ENCODE measurements at regions of chr11 and their contacts with region 1.

Region 1: GRCh38 chr11:13949876-13950275 is 12.6 kb upstream of the SPON1 start:
- DNase-seq: peak in 1 of 4 experiments; percentile 37
- ATAC-seq: no peak
- H3K4me3 ChIP-seq: no peak overlapping the region
- H3K27ac ChIP-seq: no peak overlapping the region
- H3K4me1 ChIP-seq: no peaks in the 10 kb centered on the region
- H3K27me3 ChIP-seq: peaks cover 5 to 8% of the 10 kb centered on the region in 2 experiments; a peak in 2 of 5 replicates
- CTCF ChIP-seq: peak in 1 of 3 experiments; percentile 55; a peak in 2 of 6 replicates
- EP300 ChIP-seq: no peak
- POLR2A ChIP-seq: no peak
- RAD21 ChIP-seq: peak; percentile 76 to 85

Region 2: DNA sequence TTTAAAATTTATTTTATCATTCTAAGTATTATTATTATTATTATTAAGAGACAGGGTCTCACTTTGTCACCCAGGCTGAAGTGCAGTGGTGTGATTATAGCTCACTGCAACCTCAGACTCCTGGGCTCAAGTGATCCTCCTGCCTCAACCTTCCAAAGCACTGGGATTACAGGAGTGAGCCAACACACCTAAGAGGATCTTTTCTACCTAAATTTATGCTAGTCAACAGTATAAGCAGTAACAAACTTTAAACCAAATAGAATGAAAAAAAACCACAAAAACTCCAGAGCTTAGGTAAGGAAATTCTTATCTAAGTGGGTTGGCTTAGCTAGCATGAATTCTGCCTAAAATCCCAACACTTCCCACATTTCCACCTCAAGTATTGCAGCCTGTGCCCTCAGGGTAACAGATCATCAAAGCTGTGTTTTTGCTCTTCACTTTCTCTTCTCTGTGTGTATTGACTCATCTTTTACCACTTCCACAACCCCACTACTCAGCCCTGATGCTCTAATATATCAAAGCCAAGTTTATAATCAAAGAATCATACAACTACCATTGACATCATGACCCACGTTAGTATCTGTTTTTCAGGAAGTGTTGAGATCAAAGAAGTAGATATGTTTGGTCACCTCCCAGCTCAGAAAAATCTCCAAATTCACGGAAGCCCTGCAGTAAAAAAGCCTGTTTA is 81.0 kb before region 1 on chr11:
- CTCF ChIA-PET with region 1: no interaction called
- POLR2A ChIA-PET with region 1: no interaction called
- in situ Hi-C with region 1: no loop called
- intact Hi-C with region 1: loop called (anchors 2 kb)
- DNase-seq: no peak
- ATAC-seq: no peak
- H3K4me3 ChIP-seq: no peak overlapping the region
- H3K27ac ChIP-seq: no peak overlapping the region
- H3K4me1 ChIP-seq: peaks cover 17 to 20% of the 10 kb centered on the region in 2 experiments
- H3K27me3 ChIP-seq: no peaks in the 10 kb centered on the region
- CTCF ChIP-seq: no peak
- EP300 ChIP-seq: no peak
- POLR2A ChIP-seq: no peak
- RAD21 ChIP-seq: no peak

Measured in K562 (cell line).